ENCODE measurements at regions of chr10 and their contacts with region 1.

Region 1: DNA sequence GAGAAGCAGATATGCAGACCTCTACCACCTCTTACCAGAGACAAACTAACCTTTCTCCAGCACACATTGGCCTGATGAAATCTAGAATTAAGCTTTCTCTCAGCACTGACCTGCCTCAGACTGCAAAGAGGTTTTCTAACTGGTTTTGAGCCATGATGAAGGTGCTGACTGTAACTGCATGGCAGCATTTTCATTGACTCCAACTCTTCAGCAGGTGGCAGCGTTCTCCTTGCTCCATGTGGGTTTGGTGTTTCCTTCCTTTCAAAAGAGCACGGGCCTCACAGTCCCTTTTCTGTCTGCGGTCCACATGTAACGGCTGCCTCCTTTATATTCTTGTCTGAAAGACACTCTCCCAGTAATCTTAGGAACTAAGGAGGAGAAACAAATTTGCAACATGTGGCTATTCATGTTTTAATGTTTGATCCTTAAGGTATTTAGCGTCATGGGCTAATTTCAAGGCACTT is 12.6 kb downstream of the KLLN start:
- DNase-seq: no peak
- H3K4me3 ChIP-seq: no peak overlapping the region
- H3K27me3 ChIP-seq: no peaks in the 10 kb centered on the region
- CTCF ChIP-seq: peak; percentile 79

Region 2: DNA sequence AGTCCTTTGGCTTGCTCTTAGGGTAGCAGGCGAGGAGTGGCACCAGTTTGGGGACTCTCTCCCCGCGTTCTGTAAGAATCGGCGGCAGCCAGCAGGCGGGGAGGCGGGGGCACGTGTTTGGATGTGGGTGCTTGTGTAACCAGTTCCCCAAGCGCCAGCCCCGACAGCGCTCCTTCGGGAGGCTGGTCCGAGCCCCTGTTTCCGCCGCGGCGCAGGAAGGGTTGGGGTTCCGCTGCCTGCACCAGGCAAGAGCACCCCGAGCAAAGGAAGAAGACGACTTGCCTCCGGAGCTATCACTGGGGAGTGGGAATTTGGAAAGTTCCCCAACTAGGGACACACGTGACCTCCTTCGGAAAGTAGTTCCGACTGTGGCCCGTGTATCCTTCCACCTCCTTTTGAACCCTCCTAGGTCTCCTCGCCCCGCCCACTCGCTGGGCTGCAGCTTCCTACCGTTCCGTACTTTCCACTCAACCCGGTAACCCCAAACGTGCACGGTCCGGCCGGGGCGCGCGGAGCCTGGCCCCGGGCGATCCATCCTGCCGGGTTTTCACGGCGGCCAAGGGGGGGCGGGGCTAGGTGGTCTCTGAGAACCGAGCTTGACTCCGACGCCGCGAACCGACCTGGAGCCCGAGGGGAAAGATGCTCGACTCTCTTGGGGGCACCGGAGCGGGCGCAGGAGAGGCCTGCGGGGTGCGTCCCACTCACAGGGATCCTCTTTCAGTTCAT is 11.3 kb after region 1 on chr10:
- CTCF ChIA-PET with region 1: interaction called, 20 read pairs
- POLR2A ChIA-PET with region 1: no interaction called
- DNase-seq: peak; percentile 73
- H3K4me3 ChIP-seq: peak overlapping the region; percentile 84
- H3K27me3 ChIP-seq: no peaks in the 10 kb centered on the region
- CTCF ChIP-seq: no peak

Region 3: DNA sequence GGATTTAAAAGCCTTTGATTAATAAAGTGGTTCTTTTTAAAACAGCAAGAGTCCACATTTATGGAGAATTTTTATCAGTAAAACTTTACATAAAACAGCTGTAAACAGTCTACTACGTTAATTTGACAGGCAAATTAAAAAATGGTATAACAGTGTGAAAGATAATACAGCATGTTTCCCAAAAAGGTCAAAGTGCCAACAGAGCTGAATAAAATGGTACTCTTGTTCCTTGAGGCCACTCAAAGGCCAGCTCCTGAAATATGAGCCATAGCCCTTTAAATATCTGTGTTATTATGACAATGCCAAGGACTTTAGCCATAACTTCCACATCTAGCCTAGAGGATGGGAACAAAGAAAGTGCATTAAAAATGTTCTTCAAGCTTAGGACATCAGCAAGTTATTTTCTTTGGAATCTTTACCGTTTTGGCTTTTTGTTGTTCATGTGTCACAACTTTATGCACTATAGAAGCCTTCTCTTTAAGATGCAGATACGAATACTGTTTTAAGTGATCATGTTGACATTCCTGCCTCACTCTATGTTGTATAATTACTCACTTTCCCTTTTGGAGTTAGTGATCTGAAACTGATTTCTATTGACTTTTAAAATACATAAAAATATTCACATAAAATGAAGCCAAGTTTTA is 566.7 kb after region 1 on chr10:
- CTCF ChIA-PET with region 1: no interaction called
- POLR2A ChIA-PET with region 1: no interaction called
- DNase-seq: no peak
- H3K4me3 ChIP-seq: no peak overlapping the region
- H3K27me3 ChIP-seq: no peaks in the 10 kb centered on the region
- CTCF ChIP-seq: no peak

Region 4: GRCh38 chr10:88553116-88553752 is 702.5 kb after region 1 on chr10:
- CTCF ChIA-PET with region 1: interaction called, 11 read pairs
- POLR2A ChIA-PET with region 1: no interaction called
- DNase-seq: peak; percentile 56
- H3K4me3 ChIP-seq: no peak overlapping the region
- H3K27me3 ChIP-seq: no peaks in the 10 kb centered on the region
- CTCF ChIP-seq: peak; percentile 84

Measured in BJ (cell line).